Uterus (tissue), 4 donors: ENCODE measurements at regions of chr11 and their contacts with region 1.

Region 1: GRCh38 chr11:111766093-111766833 is at the start of gene PPP2R1B:
- DNase-seq: peak; percentile 72 to 76
- H3K4me3 ChIP-seq: peak within 1 kb of the TSS; percentile 95 to 96
- H3K27ac ChIP-seq: peak within 1 kb of the TSS; percentile 94 to 97
- H3K4me1 ChIP-seq: no peaks in the 10 kb centered on the region
- H3K27me3 ChIP-seq: no peaks in the 10 kb centered on the region
- CTCF ChIP-seq: peak in 1 of 4 experiments; percentile 5
- POLR2A ChIP-seq: peak; percentile 62 to 66
- total RNA-seq, gene PPP2R1B: 12.0 to 30.0 (median 28.4) TPM

Region 2: GRCh38 chr11:111601979-111602864 is 164.0 kb before region 1 on chr11 and contains the start of gene SIK2:
- intact Hi-C with region 1: loop called (anchors 5 kb)
- DNase-seq: peak; percentile 94 to 97
- H3K4me3 ChIP-seq: peak within 1 kb of the TSS; percentile 87 to 88
- H3K27ac ChIP-seq: peak within 1 kb of the TSS; percentile 97 to 98
- H3K4me1 ChIP-seq: no peaks in the 10 kb centered on the region
- H3K27me3 ChIP-seq: no peaks in the 10 kb centered on the region
- CTCF ChIP-seq: peak; percentile 85 to 100 (median 96)
- POLR2A ChIP-seq: peak in 1 of 2 donors; percentile 67
- total RNA-seq, gene SIK2: 11.5 to 27.7 (median 16.7) TPM